ENCODE measurements at regions of chr17 and their contacts with region 1.

Region 1: DNA sequence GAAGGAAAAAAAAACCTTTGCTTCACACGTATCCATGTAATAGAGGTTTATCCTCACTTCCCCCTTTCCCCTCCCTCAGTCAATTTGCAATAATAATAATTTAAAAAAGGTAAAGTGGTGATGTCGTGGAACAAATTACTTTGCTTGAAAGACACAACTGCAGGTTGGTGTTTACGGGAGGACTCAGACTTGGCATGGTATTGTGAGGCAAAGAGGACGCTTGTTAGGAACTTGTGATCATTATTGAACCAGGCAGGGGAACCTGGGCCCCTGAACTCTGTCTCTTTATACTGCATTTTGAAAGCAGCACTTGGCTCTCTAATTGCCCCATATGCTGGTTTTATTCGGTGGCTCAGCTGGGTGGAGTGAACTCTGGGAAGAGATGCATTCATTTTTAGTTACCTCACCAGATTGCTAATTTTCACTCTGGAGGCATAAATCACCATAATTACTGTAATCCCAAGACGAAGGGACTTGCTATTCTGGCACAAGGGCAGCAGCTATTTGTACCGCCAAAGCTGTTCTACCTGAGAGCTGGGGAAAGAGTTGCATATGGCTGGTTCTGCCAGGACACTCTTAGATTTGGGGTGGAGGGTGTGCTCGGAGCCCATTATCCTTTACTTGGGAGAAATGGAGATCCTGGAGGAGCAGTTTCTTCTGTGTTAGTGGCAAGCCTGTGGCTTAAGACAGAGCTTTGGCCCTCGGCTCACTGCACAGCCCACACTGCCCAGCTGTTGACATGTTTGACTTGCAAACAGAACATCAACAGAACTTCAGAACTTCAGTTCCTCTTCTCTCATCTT is 5.7 kb upstream of the DHX8 start:
- DNase-seq: no peak
- ATAC-seq: no peak
- H3K4me3 Mint-ChIP-seq: no peak overlapping the region
- H3K27ac Mint-ChIP-seq: no peak overlapping the region
- H3K4me1 Mint-ChIP-seq: no peaks in the 10 kb centered on the region
- H3K27me3 Mint-ChIP-seq: no peaks in the 10 kb centered on the region

Region 2: DNA sequence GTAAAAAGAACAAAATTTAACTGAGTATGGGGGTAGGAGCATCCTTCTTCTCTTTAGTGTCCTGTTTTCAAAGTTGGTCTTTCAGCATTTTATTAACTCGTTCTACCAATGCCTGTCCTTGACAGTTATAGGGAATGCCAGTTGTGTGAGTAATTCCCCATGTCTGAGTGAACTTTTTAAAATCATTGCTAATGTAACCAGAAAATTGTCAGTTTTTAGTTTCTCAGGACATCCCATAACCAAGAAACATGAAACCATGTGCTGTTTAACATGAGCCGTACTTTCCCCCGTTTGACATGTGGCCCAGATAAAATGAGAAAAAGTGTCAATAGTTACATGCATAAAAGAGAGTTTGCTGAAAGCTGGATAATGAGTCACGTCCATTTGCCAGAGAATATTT is 150.6 kb before region 1 on chr17:
- CTCF ChIA-PET with region 1: no interaction called
- POLR2A ChIA-PET with region 1: no interaction called
- intact Hi-C with region 1: loop called in 1 of 2 experiments (anchors 5 kb)
- DNase-seq: no peak
- ATAC-seq: no peak
- H3K4me3 Mint-ChIP-seq: no peak overlapping the region
- H3K27ac Mint-ChIP-seq: no peak overlapping the region
- H3K4me1 Mint-ChIP-seq: peaks cover 12% of the 10 kb centered on the region
- H3K27me3 Mint-ChIP-seq: peaks cover 19% of the 10 kb centered on the region

Region 3: DNA sequence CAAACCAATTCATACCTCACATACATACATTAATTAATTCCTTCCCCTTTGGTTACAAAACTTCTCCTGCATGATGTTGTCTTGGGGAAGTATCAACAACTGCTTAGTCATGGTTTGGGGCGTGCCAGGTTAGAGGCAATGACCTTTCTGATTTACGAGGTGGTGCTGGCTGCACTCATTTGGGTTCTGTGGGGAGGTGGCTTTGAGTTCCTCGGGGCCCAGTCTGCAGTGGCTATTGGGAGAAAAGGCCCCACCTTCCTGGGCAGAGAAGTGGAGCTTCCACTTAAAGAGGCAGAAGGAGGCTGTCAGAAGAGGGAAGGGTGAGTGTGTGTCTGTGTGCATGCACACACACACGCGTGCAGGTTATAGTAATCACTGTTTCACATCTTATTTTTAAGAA is 78.3 kb after region 1 on chr17:
- CTCF ChIA-PET with region 1: no interaction called
- POLR2A ChIA-PET with region 1: no interaction called
- intact Hi-C with region 1: no loop called
- DNase-seq: peak; percentile 44
- ATAC-seq: peak; percentile 66
- H3K4me3 Mint-ChIP-seq: no peak overlapping the region
- H3K27ac Mint-ChIP-seq: peak overlapping the region; percentile 23
- H3K4me1 Mint-ChIP-seq: peaks cover 5% of the 10 kb centered on the region
- H3K27me3 Mint-ChIP-seq: peaks cover 13% of the 10 kb centered on the region

Measured in activated CD4-positive, alpha-beta T cell treated with anti-CD3 and anti-CD28 coated beads for 36 hours (primary cell).